ENCODE measurements at regions of chr3 and their contacts with region 1.

Region 1: DNA sequence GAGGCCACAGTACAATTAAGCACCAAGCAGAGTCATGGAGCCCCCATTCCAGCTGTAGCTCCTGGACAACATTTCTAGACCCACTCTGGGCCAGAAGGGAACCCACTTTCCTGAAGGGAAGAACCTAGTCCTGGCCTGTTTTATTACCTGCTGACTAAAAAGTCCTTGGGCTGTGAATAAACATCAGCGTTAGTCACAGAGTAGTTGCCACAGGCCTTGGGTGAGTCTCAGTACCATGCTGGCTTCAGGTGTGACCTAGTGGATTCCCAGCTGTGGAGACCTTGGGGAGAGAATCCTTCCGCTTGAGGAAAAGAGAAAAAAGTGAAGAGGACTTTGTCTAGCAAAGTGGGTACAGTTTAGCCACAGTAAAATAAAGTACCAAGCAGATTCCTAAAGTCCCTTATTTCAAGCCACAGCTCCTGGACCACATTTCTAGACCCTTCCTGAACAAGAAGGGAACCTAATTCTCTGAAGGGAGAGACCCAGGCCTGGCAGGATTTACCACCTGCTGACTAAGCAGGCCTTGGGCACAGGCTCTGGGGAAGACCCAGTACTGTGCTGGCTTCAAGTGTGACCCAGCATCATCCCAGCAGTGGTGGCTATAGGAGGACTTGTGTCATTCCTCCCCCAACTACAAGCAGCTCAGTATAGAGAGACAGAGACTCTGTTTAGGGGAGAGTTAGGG is 118.3 kb upstream of the KCNH8 start:
- DNase-seq: no peak
- ATAC-seq: no peak
- H3K4me3 ChIP-seq: no peak overlapping the region
- H3K27ac ChIP-seq: no peak overlapping the region
- H3K4me1 ChIP-seq: no peaks in the 10 kb centered on the region
- H3K27me3 ChIP-seq: no peaks in the 10 kb centered on the region
- CTCF ChIP-seq: no peak
- POLR2A ChIP-seq: no peak
- RAD21 ChIP-seq: no peak

Region 2: GRCh38 chr3:18241837-18242236 is 788.1 kb before region 1 on chr3:
- CTCF ChIA-PET with region 1: no interaction called
- POLR2A ChIA-PET with region 1: no interaction called
- dilution Hi-C with region 1: no loop called
- in situ Hi-C with region 1: no loop called
- intact Hi-C with region 1: loop called (anchors 5 kb)
- DNase-seq: no peak
- ATAC-seq: no peak
- H3K4me3 ChIP-seq: no peak overlapping the region
- H3K27ac ChIP-seq: no peak overlapping the region
- H3K4me1 ChIP-seq: no peaks in the 10 kb centered on the region; the same call in 1 of the 2 replicates
- H3K27me3 ChIP-seq: no peaks in the 10 kb centered on the region
- CTCF ChIP-seq: no peak
- POLR2A ChIP-seq: no peak
- RAD21 ChIP-seq: no peak

Measured in IMR-90 (cell line).